ENCODE measurements at regions of chr20 and their contacts with region 1.

Region 1: DNA sequence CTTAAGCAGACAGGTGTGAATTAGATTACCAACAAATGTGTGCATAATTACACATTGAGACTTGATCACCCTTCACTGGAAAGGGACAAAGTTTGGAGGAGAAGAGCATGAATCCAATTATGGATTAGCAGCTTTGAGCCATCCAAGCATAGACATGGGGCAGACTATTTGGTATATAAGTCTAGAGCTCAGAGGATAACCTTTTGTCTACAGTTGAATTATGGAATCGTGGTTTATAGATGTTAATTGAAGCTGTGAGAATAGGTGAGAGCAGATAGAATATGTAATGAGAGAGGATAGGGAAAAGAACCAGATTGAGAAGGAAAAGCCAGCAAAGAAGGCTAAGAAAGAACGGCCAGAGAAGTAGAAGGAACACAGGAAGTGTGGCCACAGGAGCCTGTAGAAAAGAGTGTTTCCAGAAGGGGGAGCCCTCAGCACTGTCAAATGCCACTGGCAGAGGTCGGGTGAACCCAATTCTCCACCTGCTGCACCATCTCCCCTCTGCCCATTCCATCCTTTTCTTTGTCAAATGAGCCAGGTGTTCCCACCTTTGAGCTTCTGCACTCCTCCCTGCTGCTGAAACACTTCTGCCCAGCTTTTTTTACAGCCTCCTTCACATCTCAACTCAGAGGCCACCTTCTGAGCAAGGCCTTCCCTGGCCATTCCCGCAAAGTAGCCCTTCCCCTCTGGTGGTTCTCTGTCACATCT is 7.3 kb downstream of the DNTTIP1 start:
- DNase-seq: peak; percentile 57 to 66
- ATAC-seq: peak; percentile 98
- H3K4me3 ChIP-seq: no peak overlapping the region
- H3K27ac ChIP-seq: no peak overlapping the region
- H3K4me1 ChIP-seq: no peaks in the 10 kb centered on the region
- CTCF ChIP-seq: peak; percentile 73
- EP300 ChIP-seq: no peak
- POLR2A ChIP-seq: no peak
- RAD21 ChIP-seq: peak; percentile 66 to 67

Region 2: GRCh38 chr20:45487231-45487635 is 311.9 kb before region 1 on chr20:
- CTCF ChIA-PET with region 1: no interaction called
- POLR2A ChIA-PET with region 1: no interaction called
- DNase-seq: peak in 1 of 2 experiments; percentile 20
- ATAC-seq: peak; percentile 50 to 68; a peak in 4 of 6 replicates
- H3K4me3 ChIP-seq: no peak overlapping the region
- H3K27ac ChIP-seq: no peak overlapping the region
- H3K4me1 ChIP-seq: no peaks in the 10 kb centered on the region
- CTCF ChIP-seq: 0 out of 3 replicates have a peak, but pooled peaks have one; percentile 9
- EP300 ChIP-seq: no peak
- POLR2A ChIP-seq: no peak
- RAD21 ChIP-seq: no peak

Region 3: GRCh38 chr20:45670139-45670538 is 128.9 kb before region 1 on chr20 and contains the start of gene WFDC11:
- CTCF ChIA-PET with region 1: no interaction called
- POLR2A ChIA-PET with region 1: no interaction called
- DNase-seq: no peak
- ATAC-seq: no peak
- H3K4me3 ChIP-seq: no peak within 1 kb of the TSS
- H3K27ac ChIP-seq: no peak within 1 kb of the TSS
- H3K4me1 ChIP-seq: no peaks in the 10 kb centered on the region
- CTCF ChIP-seq: no peak
- EP300 ChIP-seq: no peak
- POLR2A ChIP-seq: no peak
- RAD21 ChIP-seq: no peak
- polyA plus RNA-seq, gene WFDC11: not detected in 2 replicates

Region 4: GRCh38 chr20:45779011-45779915 is 19.8 kb before region 1 on chr20:
- CTCF ChIA-PET with region 1: interaction called, 11 read pairs
- POLR2A ChIA-PET with region 1: interaction called, 3 read pairs
- DNase-seq: peak; percentile 87 to 94
- ATAC-seq: peak; percentile 92
- H3K4me3 ChIP-seq: no peak overlapping the region
- H3K27ac ChIP-seq: peak overlapping the region; percentile 34 to 63; a peak in 5 of 6 replicates
- H3K4me1 ChIP-seq: peaks cover 47% of the 10 kb centered on the region
- CTCF ChIP-seq: no peak
- EP300 ChIP-seq: peak in 1 of 2 experiments; percentile 52; a peak in 1 of 5 replicates
- POLR2A ChIP-seq: no peak
- RAD21 ChIP-seq: no peak

Region 5: GRCh38 chr20:45812157-45813020 is 13.3 kb after region 1 on chr20 and contains the start of gene UBE2C:
- CTCF ChIA-PET with region 1: interaction called, 30 read pairs
- POLR2A ChIA-PET with region 1: interaction called, 3 read pairs
- DNase-seq: peak; percentile 99 to 100
- ATAC-seq: peak; percentile 97 to 99
- H3K4me3 ChIP-seq: peak within 1 kb of the TSS; percentile 87
- H3K27ac ChIP-seq: peak within 1 kb of the TSS; percentile 84 to 93
- H3K4me1 ChIP-seq: peaks cover 44% of the 10 kb centered on the region
- CTCF ChIP-seq: no peak
- EP300 ChIP-seq: no peak
- POLR2A ChIP-seq: peak; percentile 32
- RAD21 ChIP-seq: no peak
- polyA plus RNA-seq, gene UBE2C: 123 and 137 TPM in 2 replicates

Region 6: DNA sequence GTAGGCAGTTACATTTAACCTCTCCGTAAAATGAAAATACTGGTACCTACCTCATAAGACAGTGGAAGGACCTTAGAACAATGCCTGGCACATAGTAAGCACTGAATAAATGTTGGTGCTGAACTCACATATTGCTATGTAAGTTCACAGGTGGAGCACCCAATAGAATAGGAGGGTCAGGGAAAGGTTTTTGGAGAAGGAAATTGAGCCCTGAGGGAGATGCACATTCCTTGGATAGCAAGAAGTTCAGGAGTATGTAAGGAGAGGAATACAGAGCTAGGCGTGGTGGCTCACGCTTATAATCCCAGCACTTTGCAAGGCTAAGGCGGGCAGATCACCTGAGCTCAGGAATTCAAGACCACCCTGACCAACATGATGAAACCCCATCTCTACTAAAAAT is 20.4 kb after region 1 on chr20:
- CTCF ChIA-PET with region 1: interaction called, 30 read pairs
- POLR2A ChIA-PET with region 1: interaction called, 3 read pairs
- DNase-seq: no peak
- ATAC-seq: no peak
- H3K4me3 ChIP-seq: no peak overlapping the region
- H3K27ac ChIP-seq: no peak overlapping the region
- H3K4me1 ChIP-seq: peaks cover 33% of the 10 kb centered on the region
- CTCF ChIP-seq: no peak
- EP300 ChIP-seq: no peak
- POLR2A ChIP-seq: no peak
- RAD21 ChIP-seq: no peak

Region 7: DNA sequence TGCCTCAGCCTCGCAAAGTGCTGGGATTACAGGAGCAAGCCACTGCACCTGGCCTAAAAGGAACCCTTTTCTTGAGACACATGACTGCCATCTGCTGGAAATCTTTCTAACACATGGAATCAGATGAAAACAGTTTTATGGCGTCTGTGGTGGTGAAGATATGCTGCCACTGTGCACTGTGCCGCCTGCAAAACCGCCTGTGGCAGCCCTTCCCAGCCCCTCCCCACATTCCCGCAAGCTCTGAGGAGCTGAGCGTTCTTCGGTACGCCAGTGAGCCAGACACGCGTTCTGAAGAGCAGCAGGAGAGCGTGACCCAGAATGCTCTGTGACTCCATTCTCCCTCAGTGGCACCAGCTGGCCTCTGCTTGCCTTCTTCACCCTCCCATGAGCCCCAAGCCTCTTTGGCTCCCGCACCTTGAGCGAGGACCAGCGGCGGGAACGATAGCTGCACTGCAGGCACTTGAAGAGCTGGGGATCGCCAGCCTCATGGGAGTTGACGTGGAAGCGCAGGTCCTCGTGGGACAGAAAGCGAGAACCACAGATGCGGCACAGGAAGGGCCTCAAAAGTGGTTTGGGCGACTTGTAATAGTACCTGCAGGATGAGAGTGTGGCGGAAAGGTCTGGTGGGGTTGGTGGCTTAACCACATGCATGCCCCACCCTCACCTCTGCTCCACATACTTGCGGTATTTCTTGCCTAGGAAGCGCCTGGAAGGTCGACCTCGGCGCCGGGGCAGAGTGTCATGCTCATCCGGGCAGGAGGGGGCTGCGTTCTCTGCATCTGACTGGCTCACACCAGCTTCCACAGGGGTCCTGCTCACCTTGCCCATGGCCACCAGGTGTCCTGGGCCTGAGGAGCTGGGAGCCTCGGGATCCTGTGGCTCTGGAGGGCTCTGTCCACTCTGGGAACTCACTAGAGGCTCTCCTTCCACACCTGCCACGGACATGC is 164.2 kb after region 1 on chr20:
- CTCF ChIA-PET with region 1: interaction called, 48 read pairs
- POLR2A ChIA-PET with region 1: no interaction called
- DNase-seq: peak; percentile 28 to 68
- ATAC-seq: peak; percentile 77 to 79
- H3K4me3 ChIP-seq: no peak overlapping the region
- H3K27ac ChIP-seq: no peak overlapping the region
- H3K4me1 ChIP-seq: no peaks in the 10 kb centered on the region
- CTCF ChIP-seq: peak; percentile 40; the same call in 2 of the 3 replicates
- EP300 ChIP-seq: no peak
- POLR2A ChIP-seq: no peak
- RAD21 ChIP-seq: peak; percentile 57 to 60; a peak in 4 of 5 replicates

Region 8: DNA sequence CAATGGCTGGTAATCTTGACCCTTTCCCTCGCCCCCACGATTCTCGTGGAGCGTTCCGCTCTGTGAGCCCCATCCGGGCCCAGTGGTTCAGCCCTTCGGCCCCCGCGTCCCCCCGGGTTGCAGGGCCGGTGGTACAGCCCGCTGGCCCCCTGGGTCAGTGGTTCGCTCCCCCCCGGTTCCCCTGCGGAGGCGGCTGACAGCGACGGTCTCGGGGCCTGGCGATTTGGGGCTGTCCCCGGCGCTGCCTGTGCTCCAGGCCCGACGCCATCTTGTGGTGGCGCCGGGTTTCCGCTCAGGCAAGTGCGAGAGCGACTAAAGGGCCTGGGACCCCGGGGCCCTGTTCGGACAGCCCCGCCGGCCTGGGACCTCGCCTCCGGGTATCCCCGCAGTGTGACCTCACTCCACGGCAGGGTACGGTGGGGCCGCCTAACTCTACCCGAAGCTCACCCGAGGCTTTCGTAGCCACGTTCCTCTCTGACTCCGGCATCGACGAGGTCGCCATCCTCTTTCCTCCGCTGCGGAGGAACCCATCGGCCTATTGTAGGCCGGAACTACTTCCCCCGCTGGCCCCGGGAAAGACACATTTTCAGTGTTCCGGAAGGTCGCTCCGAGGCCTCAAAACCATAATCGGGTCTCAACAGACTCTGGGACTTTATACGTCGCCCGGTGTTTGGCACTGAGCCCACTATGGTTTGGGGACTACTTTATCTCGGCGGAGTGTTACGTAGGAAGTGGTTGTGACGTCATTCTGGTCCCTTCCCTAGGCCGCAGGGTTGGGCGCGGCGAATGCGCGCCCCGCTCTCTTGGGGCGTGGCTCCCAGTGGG is 172.8 kb after region 1 on chr20 and contains the start of gene ZNF335:
- CTCF ChIA-PET with region 1: interaction called, 30 read pairs
- POLR2A ChIA-PET with region 1: no interaction called
- DNase-seq: peak; percentile 92 to 98
- ATAC-seq: peak; percentile 77 to 91
- H3K4me3 ChIP-seq: peak within 1 kb of the TSS; percentile 95
- H3K27ac ChIP-seq: peak within 1 kb of the TSS; percentile 98 to 99
- H3K4me1 ChIP-seq: peaks cover 21% of the 10 kb centered on the region
- CTCF ChIP-seq: no peak
- EP300 ChIP-seq: no peak
- POLR2A ChIP-seq: peak; percentile 53
- RAD21 ChIP-seq: no peak
- polyA plus RNA-seq, gene ZNF335: 7.3 and 8.4 TPM in 2 replicates